K562 (cell line): ENCODE measurements at regions of chr11 and their contacts with region 1.

Region 1: DNA sequence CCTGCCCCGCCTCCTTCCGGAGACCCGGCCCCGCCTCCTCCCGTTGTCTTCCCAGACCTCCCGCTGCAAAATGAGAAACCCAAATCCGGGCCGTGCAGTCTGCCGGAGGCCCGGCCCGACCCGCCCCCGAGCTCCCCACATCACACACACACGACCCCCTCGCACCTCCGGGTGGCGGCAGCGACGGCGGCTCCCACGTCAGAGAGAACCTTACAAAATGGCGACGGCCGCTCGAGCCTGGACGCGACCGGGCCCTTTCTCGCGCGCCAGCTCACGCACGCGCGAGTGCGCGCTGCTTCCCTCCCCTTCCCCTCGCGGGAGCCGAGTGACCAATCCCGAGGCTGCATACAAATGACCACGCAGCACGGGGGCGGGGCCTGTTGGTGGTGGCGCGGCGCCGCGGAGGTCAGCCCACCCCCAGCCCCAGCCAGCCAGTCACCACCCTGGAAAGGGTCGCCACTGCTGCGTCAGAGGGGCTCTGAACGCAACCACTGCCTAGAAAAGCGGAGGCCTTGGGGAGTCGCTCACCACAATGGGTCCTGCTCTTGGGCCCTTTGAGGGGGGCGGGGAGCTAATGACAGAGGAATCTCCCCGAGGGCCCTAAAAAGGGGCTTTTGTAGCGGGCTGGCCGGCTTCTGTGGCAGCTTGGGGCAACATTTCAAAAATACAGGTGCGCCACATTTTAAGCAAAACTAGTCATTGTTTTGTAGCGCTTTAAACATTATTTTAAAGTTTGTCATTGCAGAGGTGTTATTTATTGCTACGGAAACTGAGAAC is at the start of gene RBM4B:
- DNase-seq: peak; percentile 98 to 99 (median 98)
- ATAC-seq: peak; percentile 97
- H3K4me3 ChIP-seq: peak within 1 kb of the TSS; percentile 59
- H3K27ac ChIP-seq: peak within 1 kb of the TSS; percentile 93
- H3K4me1 ChIP-seq: peaks cover 21 to 31% of the 10 kb centered on the region in 2 experiments; a peak in 4 of 5 replicates
- H3K27me3 ChIP-seq: no peaks in the 10 kb centered on the region
- CTCF ChIP-seq: 0 out of 6 replicates have a peak, but pooled peaks of 1 of the 3 experiments have one; percentile 0
- EP300 ChIP-seq: no peak
- POLR2A ChIP-seq: peak; percentile 87
- RAD21 ChIP-seq: no peak
- polyA plus RNA-seq, gene RBM4B: 29.7 to 32.3 TPM

Region 2: GRCh38 chr11:66408488-66409214 is 269.1 kb before region 1 on chr11:
- CTCF ChIA-PET with region 1: interaction called, 139 read pairs
- POLR2A ChIA-PET with region 1: interaction called, 3 read pairs
- in situ Hi-C with region 1: loop called (anchors 5 kb)
- intact Hi-C with region 1: loop called (anchors 1 kb)
- DNase-seq: peak; percentile 90 to 93 (median 92)
- ATAC-seq: peak; percentile 93
- H3K4me3 ChIP-seq: no peak overlapping the region
- H3K27ac ChIP-seq: no peak overlapping the region
- H3K4me1 ChIP-seq: peaks cover 7 to 9% of the 10 kb centered on the region in 2 experiments; a peak in 2 of 5 replicates
- H3K27me3 ChIP-seq: peaks cover 55 to 70% of the 10 kb centered on the region in 2 experiments
- CTCF ChIP-seq: peak; percentile 99 to 100 (median 99)
- EP300 ChIP-seq: peak; percentile 31; the same call in 1 of the 2 replicates
- POLR2A ChIP-seq: no peak
- RAD21 ChIP-seq: peak; percentile 100

Region 3: GRCh38 chr11:66438504-66439466 is 239.0 kb before region 1 on chr11 and contains the start of gene MRPL11:
- CTCF ChIA-PET with region 1: interaction called, 4 read pairs
- POLR2A ChIA-PET with region 1: interaction called, 3 read pairs
- in situ Hi-C with region 1: no loop called
- intact Hi-C with region 1: loop called (anchors 5 kb)
- DNase-seq: peak; percentile 93 to 96 (median 95)
- ATAC-seq: peak; percentile 99
- H3K4me3 ChIP-seq: peak within 1 kb of the TSS; percentile 86
- H3K27ac ChIP-seq: peak within 1 kb of the TSS; percentile 89
- H3K4me1 ChIP-seq: peaks cover 3 to 12% of the 10 kb centered on the region in 2 experiments; a peak in 3 of 5 replicates
- H3K27me3 ChIP-seq: peaks cover 0 to 10% of the 10 kb centered on the region in 2 experiments; a peak in 2 of 5 replicates
- CTCF ChIP-seq: peak; percentile 78 to 91 (median 91)
- EP300 ChIP-seq: no peak; the same call in 1 of the 2 replicates
- POLR2A ChIP-seq: peak; percentile 86
- RAD21 ChIP-seq: peak; percentile 49 to 66
- polyA plus RNA-seq, gene MRPL11: 33.0 to 43.5 TPM

Region 4: GRCh38 chr11:66579017-66579606 is 98.7 kb before region 1 on chr11:
- CTCF ChIA-PET with region 1: interaction called, 11 read pairs
- POLR2A ChIA-PET with region 1: interaction called, 6 read pairs
- in situ Hi-C with region 1: loop called (anchors 5 kb)
- intact Hi-C with region 1: loop called (anchors 1 kb)
- DNase-seq: peak; percentile 82 to 86 (median 84)
- ATAC-seq: peak; percentile 96
- H3K4me3 ChIP-seq: no peak overlapping the region
- H3K27ac ChIP-seq: no peak overlapping the region
- H3K4me1 ChIP-seq: peaks cover 3 to 5% of the 10 kb centered on the region in 2 experiments; a peak in 2 of 5 replicates
- H3K27me3 ChIP-seq: no peaks in the 10 kb centered on the region
- CTCF ChIP-seq: peak; percentile 77 to 90 (median 83)
- EP300 ChIP-seq: no peak
- POLR2A ChIP-seq: no peak
- RAD21 ChIP-seq: peak; percentile 60 to 81

Region 5: GRCh38 chr11:66616379-66617154 is 61.2 kb before region 1 on chr11 and contains the start of gene RBM14:
- CTCF ChIA-PET with region 1: no interaction called
- POLR2A ChIA-PET with region 1: interaction called, 11 read pairs
- in situ Hi-C with region 1: no loop called
- intact Hi-C with region 1: no loop called
- DNase-seq: peak; percentile 99 to 100 (median 100)
- ATAC-seq: peak; percentile 98
- H3K4me3 ChIP-seq: peak within 1 kb of the TSS; percentile 94
- H3K27ac ChIP-seq: peak within 1 kb of the TSS; percentile 99
- H3K4me1 ChIP-seq: peaks cover 21 to 31% of the 10 kb centered on the region in 2 experiments
- H3K27me3 ChIP-seq: no peaks in the 10 kb centered on the region
- CTCF ChIP-seq: no peak
- EP300 ChIP-seq: peak; percentile 66
- POLR2A ChIP-seq: peak; percentile 100
- RAD21 ChIP-seq: 0 out of 4 replicates have a peak, but pooled peaks have one; percentile 4 to 8
- polyA plus RNA-seq, gene RBM14: 5.5 to 8.9 TPM

Region 6: DNA sequence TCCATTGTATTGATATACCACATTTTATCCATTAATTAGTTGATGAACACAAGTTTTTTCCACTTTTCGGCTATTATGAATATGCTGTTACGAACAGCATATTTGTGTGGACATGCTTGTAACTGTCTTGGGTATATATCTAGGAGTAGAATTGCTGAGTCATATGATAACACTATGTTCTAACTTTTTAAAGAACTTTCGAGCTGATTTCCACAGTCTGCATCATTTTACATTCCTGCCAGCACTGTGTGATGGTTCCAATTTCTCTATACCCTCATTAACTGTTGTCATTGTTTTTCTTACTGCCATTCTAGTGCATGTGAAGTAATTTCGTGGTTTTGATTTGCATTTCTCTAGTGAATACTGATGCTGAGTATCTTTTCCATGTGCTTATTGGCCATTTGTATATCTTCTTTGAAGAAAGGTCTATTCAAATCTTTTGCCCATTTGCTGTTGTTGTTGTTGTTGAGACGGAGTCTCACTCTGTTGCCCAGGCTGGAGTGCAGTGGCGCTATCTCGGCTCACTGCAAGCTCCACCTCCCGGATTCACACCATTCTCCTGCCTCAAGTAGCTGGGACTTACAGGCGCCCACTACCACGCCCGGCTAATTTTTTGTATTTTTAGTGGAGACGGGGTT is 158.1 kb after region 1 on chr11:
- CTCF ChIA-PET with region 1: interaction called, 3 read pairs
- POLR2A ChIA-PET with region 1: interaction called, 4 read pairs
- in situ Hi-C with region 1: no loop called
- intact Hi-C with region 1: loop called (anchors 5 kb)
- DNase-seq: no peak
- ATAC-seq: peak; percentile 58
- H3K4me3 ChIP-seq: no peak overlapping the region
- H3K27ac ChIP-seq: peak overlapping the region; percentile 36; the same call in 2 of the 3 replicates
- H3K4me1 ChIP-seq: peaks cover 29 to 41% of the 10 kb centered on the region in 2 experiments
- H3K27me3 ChIP-seq: no peaks in the 10 kb centered on the region
- CTCF ChIP-seq: no peak
- EP300 ChIP-seq: peak; percentile 69
- POLR2A ChIP-seq: 0 out of 2 replicates have a peak, but pooled peaks have one; percentile 11
- RAD21 ChIP-seq: no peak

Region 7: DNA sequence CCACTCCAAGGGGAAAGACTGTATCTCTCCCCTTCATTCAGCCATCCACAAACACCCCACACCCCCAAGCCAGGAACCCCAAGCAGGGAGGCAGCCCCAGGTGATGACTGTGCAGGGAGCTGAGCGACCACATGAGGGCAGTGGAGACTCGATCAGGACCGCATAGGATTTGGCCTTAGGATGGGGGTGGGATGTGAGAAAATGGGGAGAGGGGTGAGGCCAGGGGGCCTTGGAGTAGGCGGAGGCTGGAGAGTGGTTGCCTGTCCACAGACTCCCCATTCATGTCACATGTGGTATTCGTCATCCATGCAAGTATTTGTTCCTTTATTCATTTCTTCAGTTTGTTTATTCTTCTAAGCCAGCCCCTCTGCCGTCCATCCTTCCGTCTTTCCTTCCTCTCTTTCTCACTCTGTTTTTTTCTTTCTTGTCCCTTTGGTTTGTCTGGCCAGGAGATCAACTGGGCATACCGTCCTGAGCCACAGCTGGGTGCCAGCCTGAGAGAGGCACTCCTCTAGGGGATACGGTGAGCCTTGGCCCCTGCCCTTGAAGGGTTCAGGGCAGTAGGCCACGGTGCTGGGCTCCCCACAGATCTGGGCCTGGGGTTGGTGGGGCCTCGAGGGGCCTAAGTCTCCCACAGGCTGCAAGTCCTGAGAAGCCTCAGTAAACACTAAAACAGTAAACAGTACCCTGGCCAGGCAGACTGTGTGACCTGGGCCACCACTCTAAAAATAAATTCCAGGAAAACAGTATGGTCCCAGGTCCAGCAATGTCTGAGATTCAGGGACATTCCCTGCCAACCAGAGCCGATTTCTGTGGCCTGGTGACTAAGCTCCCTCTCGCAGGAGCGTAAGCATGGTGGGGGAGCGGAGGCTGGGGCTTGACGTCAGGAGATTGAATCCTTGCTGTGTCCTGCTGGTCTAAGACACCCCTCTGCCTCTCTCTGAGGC is 376.4 kb after region 1 on chr11:
- CTCF ChIA-PET with region 1: no interaction called
- POLR2A ChIA-PET with region 1: no interaction called
- in situ Hi-C with region 1: no loop called
- intact Hi-C with region 1: no loop called
- DNase-seq: peak; percentile 76 to 90 (median 87)
- ATAC-seq: peak; percentile 93
- H3K4me3 ChIP-seq: no peak overlapping the region
- H3K27ac ChIP-seq: no peak overlapping the region
- H3K4me1 ChIP-seq: peaks cover 26 to 36% of the 10 kb centered on the region in 2 experiments
- H3K27me3 ChIP-seq: no peaks in the 10 kb centered on the region
- CTCF ChIP-seq: peak; percentile 82 to 91 (median 84)
- EP300 ChIP-seq: no peak
- POLR2A ChIP-seq: no peak
- RAD21 ChIP-seq: peak; percentile 49 to 84